T-cell (primary cell): ENCODE measurements at regions of chr4 and their contacts with region 1.

Region 1: GRCh38 chr4:71663780-71664179 is 120.1 kb downstream of the GC start:
- DNase-seq: no peak
- ATAC-seq: no peak
- H3K4me3 ChIP-seq: no peak overlapping the region
- H3K4me3 Mint-ChIP-seq: no peak overlapping the region
- H3K27ac ChIP-seq: no peak overlapping the region
- H3K27ac Mint-ChIP-seq: no peak overlapping the region
- H3K4me1 ChIP-seq: no peaks in the 10 kb centered on the region
- H3K4me1 Mint-ChIP-seq: no peaks in the 10 kb centered on the region
- H3K27me3 ChIP-seq: peaks cover 0 to 5% of the 10 kb centered on the region in 2 experiments
- H3K27me3 Mint-ChIP-seq: peaks cover 12 to 23% of the 10 kb centered on the region in 2 donors

Region 2: DNA sequence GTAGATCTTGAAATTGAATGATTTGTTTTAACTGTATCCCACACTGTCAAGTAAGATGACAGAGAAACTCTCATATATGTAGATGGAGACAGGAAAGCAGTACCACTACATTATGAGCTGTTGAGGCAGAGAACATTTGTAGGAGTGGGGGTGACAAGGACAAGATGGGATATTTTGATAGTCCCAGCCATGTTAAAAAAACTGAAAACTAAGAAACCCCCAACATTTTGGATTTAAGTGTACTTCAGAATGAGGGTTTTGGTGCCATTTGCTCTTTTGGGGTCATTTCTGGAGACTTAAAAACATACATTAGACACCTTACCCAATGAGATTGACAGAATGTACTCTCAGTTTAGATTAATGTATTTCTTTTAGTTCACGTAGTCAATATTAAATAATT is 474.8 kb before region 1 on chr4:
- CTCF ChIA-PET with region 1: interaction called in 1 of 2 experiments, 12 read pairs
- POLR2A ChIA-PET with region 1: no interaction called
- DNase-seq: no peak
- ATAC-seq: no peak
- H3K4me3 ChIP-seq: no peak overlapping the region
- H3K4me3 Mint-ChIP-seq: peak overlapping the region; percentile 72 to 87 (median 81)
- H3K27ac ChIP-seq: peak overlapping the region; percentile 36
- H3K27ac Mint-ChIP-seq: peak overlapping the region in 1 of 2 donors; percentile 52
- H3K4me1 ChIP-seq: peaks cover 9 to 16% of the 10 kb centered on the region in 2 experiments
- H3K4me1 Mint-ChIP-seq: peaks cover 26 to 32% (median 32%) of the 10 kb centered on the region in 3 donors
- H3K27me3 ChIP-seq: peaks cover 7 to 12% of the 10 kb centered on the region in 2 experiments
- H3K27me3 Mint-ChIP-seq: peaks cover 47 to 52% of the 10 kb centered on the region in 2 donors

Region 3: DNA sequence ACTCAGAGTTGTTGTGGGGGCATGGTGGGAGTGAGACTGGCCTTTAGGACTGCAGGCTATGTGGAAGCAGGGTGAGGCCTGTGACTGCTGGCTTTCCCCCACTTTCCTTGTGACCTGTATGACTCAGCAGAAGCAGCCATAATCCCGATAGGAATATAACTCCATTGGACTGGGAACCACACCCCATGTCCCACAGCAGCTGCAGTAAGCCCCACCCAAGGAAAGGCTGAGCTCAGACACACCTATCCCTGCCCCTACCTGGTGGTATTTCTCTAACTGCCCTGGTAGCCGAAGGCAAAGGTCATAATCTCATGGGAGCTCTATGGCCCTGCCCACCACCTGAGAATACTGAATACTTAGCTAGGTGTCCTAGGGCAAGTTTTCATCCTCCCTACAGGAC is 49.2 kb before region 1 on chr4:
- CTCF ChIA-PET with region 1: interaction called in 1 of 2 experiments, 10 read pairs
- POLR2A ChIA-PET with region 1: no interaction called
- DNase-seq: no peak
- ATAC-seq: no peak
- H3K4me3 ChIP-seq: no peak overlapping the region
- H3K4me3 Mint-ChIP-seq: no peak overlapping the region
- H3K27ac ChIP-seq: no peak overlapping the region
- H3K27ac Mint-ChIP-seq: no peak overlapping the region
- H3K4me1 ChIP-seq: no peaks in the 10 kb centered on the region
- H3K4me1 Mint-ChIP-seq: no peaks in the 10 kb centered on the region
- H3K27me3 ChIP-seq: peaks cover 0 to 11% of the 10 kb centered on the region in 2 experiments
- H3K27me3 Mint-ChIP-seq: peaks cover 0 to 13% of the 10 kb centered on the region in 2 donors

Region 4: GRCh38 chr4:71689822-71690221 is 26.0 kb after region 1 on chr4:
- CTCF ChIA-PET with region 1: no interaction called
- POLR2A ChIA-PET with region 1: interaction called in 1 of 2 experiments, 16 read pairs
- DNase-seq: no peak
- ATAC-seq: no peak
- H3K4me3 ChIP-seq: no peak overlapping the region
- H3K4me3 Mint-ChIP-seq: no peak overlapping the region
- H3K27ac ChIP-seq: no peak overlapping the region
- H3K27ac Mint-ChIP-seq: no peak overlapping the region
- H3K4me1 ChIP-seq: no peaks in the 10 kb centered on the region
- H3K4me1 Mint-ChIP-seq: no peaks in the 10 kb centered on the region
- H3K27me3 ChIP-seq: no peaks in the 10 kb centered on the region
- H3K27me3 Mint-ChIP-seq: peaks cover 20 to 25% of the 10 kb centered on the region in 2 donors

Region 5: DNA sequence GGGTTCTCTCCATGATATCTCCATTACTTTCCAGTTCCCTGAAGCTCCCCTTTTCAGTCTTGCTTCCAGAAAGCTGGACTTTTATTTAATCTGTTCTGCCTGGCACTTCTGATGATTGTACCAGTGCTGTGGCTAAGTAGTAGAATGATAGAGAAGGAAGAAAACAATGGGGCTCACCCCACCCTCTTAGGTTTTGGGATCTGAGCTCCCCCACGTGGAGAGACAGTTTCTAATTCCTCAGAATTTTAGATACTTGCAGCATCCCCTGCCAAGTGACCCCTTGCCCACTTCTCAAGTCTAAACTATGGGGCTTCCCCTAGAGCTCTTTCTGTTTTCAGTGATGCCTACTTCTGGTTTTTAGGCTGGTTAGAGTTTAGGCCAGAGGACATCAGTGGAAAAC is 46.2 kb after region 1 on chr4:
- CTCF ChIA-PET with region 1: no interaction called
- POLR2A ChIA-PET with region 1: no interaction called
- DNase-seq: no peak
- ATAC-seq: no peak
- H3K4me3 ChIP-seq: no peak overlapping the region
- H3K4me3 Mint-ChIP-seq: no peak overlapping the region
- H3K27ac ChIP-seq: no peak overlapping the region
- H3K27ac Mint-ChIP-seq: no peak overlapping the region
- H3K4me1 ChIP-seq: no peaks in the 10 kb centered on the region
- H3K4me1 Mint-ChIP-seq: no peaks in the 10 kb centered on the region
- H3K27me3 ChIP-seq: no peaks in the 10 kb centered on the region
- H3K27me3 Mint-ChIP-seq: peaks cover 0 to 4% of the 10 kb centered on the region in 2 donors

Region 6: DNA sequence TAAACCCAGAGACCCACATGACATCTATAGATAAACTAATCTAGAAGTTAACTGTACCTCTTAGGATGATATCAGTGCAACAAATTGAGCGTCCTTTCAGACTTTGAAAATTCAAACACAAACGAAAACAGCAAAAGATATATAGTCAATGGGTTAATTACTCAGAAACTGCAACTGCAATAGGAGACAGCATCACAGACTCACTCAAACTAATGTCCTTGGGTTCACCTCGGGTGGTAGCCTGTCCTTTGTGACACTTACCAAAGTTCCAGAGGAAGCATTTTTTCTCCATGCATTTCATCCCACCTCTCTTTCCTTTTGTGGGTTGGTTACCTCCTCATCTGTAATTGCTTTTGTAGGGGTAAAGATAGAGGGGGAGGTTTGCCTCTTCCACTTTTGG is 110.4 kb after region 1 on chr4:
- CTCF ChIA-PET with region 1: no interaction called
- POLR2A ChIA-PET with region 1: interaction called in 1 of 2 experiments, 10 read pairs
- DNase-seq: no peak
- ATAC-seq: no peak
- H3K4me3 ChIP-seq: no peak overlapping the region
- H3K4me3 Mint-ChIP-seq: no peak overlapping the region
- H3K27ac ChIP-seq: no peak overlapping the region
- H3K27ac Mint-ChIP-seq: no peak overlapping the region
- H3K4me1 ChIP-seq: no peaks in the 10 kb centered on the region
- H3K4me1 Mint-ChIP-seq: no peaks in the 10 kb centered on the region
- H3K27me3 ChIP-seq: no peaks in the 10 kb centered on the region
- H3K27me3 Mint-ChIP-seq: peaks cover 3 to 9% of the 10 kb centered on the region in 2 donors